CD14-positive monocyte (primary cell): ENCODE measurements at regions of chr3 and their contacts with region 1.

Region 1: GRCh38 chr3:47282424-47283192 is at the starts of genes KIF9 and KLHL18:
- DNase-seq: peak; percentile 96 to 98 (median 97)
- H3K4me3 ChIP-seq: peak within 1 kb of the TSS; percentile 82 to 91 (median 84)
- H3K4me3 Mint-ChIP-seq: peak within 1 kb of the TSS; percentile 95 to 99
- H3K27ac ChIP-seq: peak within 1 kb of the TSS; percentile 92 to 98
- H3K27ac Mint-ChIP-seq: peak within 1 kb of the TSS; percentile 98 to 100 (median 100)
- H3K4me1 ChIP-seq: peaks cover 48 to 56% of the 10 kb centered on the region in 2 donors
- H3K4me1 Mint-ChIP-seq: peaks cover 52% of the 10 kb centered on the region
- H3K27me3 ChIP-seq: no peaks in the 10 kb centered on the region
- H3K27me3 Mint-ChIP-seq: peaks cover 0 to 2% (median 1%) of the 10 kb centered on the region in 3 donors
- CTCF ChIP-seq: no peak
- polyA plus RNA-seq, gene KIF9: 2.4 to 5.1 (median 3.8) TPM
- polyA plus RNA-seq, gene KLHL18: 43.4 to 63.3 (median 45.3) TPM

Region 2: GRCh38 chr3:47164007-47164881 is 118.4 kb before region 1 on chr3 and contains the start of gene SETD2:
- intact Hi-C with region 1: loop called (anchors 10 kb)
- DNase-seq: peak; percentile 63 to 78 (median 71)
- H3K4me3 ChIP-seq: peak within 1 kb of the TSS; percentile 94 to 95 (median 95)
- H3K4me3 Mint-ChIP-seq: peak within 1 kb of the TSS; percentile 98 to 100
- H3K27ac ChIP-seq: peak within 1 kb of the TSS; percentile 89
- H3K27ac Mint-ChIP-seq: peak within 1 kb of the TSS; percentile 90 to 98 (median 96)
- H3K4me1 ChIP-seq: peaks cover 43 to 51% of the 10 kb centered on the region in 2 donors
- H3K4me1 Mint-ChIP-seq: peaks cover 53% of the 10 kb centered on the region
- H3K27me3 ChIP-seq: no peaks in the 10 kb centered on the region
- H3K27me3 Mint-ChIP-seq: peaks cover 0 to 3% (median 0%) of the 10 kb centered on the region in 3 donors
- CTCF ChIP-seq: peak; percentile 18
- polyA plus RNA-seq, gene SETD2: 3.1 to 22.4 (median 7.5) TPM

Region 3: DNA sequence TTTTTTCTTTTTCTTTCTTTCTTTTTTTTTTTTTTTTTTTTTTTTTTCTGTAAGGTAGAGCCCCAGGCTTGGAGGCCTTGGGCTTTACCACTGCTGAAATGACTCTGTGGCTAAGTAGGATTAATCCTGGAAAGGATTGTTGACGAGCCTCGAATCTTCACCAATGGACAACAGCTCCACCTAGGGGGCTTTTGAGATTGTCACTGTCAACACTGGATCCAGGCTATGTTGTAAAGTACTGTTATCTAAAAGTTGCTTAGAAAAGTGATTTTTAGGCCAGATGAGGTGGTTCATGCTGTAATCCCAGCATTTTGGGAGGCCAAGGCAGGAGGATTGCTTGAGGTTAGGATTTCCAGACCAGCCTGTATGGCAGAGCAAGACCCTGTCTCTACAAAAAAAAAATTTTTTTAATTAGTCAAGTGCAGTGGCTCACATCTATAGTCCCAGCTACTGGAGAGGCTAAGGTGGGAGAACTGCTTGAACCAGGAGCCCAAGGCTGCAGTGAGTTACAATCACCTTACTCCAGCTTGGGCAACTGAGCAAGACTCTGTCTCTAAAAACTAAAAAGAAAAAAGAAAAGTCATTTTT is 41.8 kb after region 1 on chr3:
- intact Hi-C with region 1: loop called (anchors 5 kb)
- DNase-seq: peak; percentile 31 to 64 (median 55)
- H3K4me3 ChIP-seq: no peak overlapping the region
- H3K4me3 Mint-ChIP-seq: no peak overlapping the region
- H3K27ac ChIP-seq: no peak overlapping the region
- H3K27ac Mint-ChIP-seq: no peak overlapping the region
- H3K4me1 ChIP-seq: no peaks in the 10 kb centered on the region
- H3K4me1 Mint-ChIP-seq: peaks cover 3% of the 10 kb centered on the region
- H3K27me3 ChIP-seq: no peaks in the 10 kb centered on the region
- H3K27me3 Mint-ChIP-seq: peaks cover 0 to 3% (median 1%) of the 10 kb centered on the region in 3 donors
- CTCF ChIP-seq: peak; percentile 87

Region 4: GRCh38 chr3:47380601-47381316 is 98.2 kb after region 1 on chr3 and contains the start of gene PTPN23:
- intact Hi-C with region 1: loop called (anchors 2 to 10 kb)
- DNase-seq: peak; percentile 98 to 99 (median 98)
- H3K4me3 ChIP-seq: peak within 1 kb of the TSS; percentile 92 to 99 (median 94)
- H3K4me3 Mint-ChIP-seq: peak within 1 kb of the TSS; percentile 97 to 99
- H3K27ac ChIP-seq: peak within 1 kb of the TSS; percentile 97 to 98
- H3K27ac Mint-ChIP-seq: peak within 1 kb of the TSS; percentile 98 to 100 (median 99)
- H3K4me1 ChIP-seq: peaks cover 46 to 51% of the 10 kb centered on the region in 2 donors
- H3K4me1 Mint-ChIP-seq: peaks cover 57% of the 10 kb centered on the region
- H3K27me3 ChIP-seq: no peaks in the 10 kb centered on the region
- H3K27me3 Mint-ChIP-seq: peaks cover 0 to 2% (median 0%) of the 10 kb centered on the region in 3 donors
- CTCF ChIP-seq: no peak
- polyA plus RNA-seq, gene PTPN23: 1.2 to 13.7 (median 1.3) TPM